Ovary (tissue), 10 donors: ENCODE measurements at regions of chr5 and their contacts with region 1.

Region 1: DNA sequence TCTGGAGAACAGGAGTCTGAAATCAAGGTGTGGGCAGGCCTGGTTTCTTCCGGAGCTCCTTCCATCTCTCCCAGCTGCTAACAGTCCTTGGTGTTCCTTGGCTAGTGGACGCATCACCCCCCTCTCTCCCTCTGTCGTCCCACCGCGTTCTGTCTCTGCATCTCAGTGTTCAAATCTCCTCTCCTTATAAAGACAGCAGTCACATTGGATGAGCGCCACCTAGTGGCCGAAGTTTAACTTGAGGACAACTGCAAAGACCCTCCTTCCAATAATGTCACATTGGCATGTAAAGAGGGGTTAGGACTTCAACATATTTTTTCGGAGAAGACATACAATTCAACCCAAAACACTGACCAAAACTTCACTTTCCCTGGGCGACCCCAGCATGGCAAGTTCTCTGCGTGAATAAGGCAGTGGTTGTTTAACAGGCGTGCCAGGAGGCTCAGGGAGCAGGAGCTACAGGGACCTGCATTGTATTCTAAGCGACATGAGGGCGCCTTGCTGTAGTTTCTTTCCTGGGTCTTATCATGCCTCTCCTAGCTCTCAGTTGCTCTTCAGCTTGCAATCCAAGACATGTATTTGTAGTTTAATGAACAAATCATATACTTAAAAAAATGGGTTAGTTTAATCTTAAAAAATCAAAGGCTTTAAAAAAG is 27.9 kb upstream of the BASP1 start:
- DNase-seq: peak; percentile 73 to 82 (median 80)
- H3K4me3 ChIP-seq: no peak overlapping the region
- H3K27ac ChIP-seq: no peak overlapping the region
- H3K4me1 ChIP-seq: peaks cover 4% of the 10 kb centered on the region
- H3K27me3 ChIP-seq: no peaks in the 10 kb centered on the region
- CTCF ChIP-seq: peak; percentile 57 to 66 (median 63)
- EP300 ChIP-seq: no peak
- POLR2A ChIP-seq: no peak

Region 2: DNA sequence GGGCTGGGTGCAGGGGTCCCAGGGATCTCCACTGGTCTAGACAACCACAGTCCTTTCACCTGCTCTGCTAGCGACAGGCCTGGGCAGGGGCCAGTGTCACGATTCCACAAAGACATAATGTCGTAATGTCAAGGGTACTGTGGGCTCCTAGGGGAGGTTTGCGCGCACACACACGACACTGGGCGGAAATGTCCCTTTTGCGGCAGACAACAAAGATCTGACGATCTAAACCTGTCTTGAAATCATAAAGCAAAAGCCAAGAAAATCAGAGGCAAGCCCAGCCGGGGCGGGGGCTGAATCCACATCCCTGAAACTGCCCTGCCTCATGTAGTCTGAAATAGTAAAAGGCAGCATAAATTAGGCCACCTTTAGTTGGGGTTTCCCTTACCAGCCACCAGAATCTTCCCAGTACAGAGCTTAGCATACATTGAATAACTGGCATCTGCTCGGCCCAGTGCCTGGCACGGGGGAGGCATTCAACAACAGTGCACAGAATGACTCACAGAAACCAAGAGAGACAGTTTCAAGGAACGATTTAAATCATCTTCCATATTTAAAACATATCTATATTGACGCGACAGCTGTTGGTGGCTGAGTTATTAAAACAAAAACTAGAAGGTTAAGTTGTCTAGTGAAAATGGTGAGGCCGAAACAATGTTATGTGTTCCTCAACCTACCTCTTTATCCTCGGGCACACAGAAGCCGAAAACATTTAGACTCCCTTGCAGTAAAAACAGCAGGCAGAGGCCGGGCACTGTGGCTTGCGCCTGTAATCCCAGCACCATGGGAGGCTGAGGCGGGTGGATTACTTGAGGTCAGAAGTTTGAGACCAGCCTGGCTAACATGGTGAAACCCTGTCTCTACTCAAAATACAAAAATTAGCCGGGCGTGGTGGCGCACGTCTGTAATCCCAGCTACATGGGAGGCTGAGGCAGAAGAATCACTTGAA is 404.4 kb before region 1 on chr5:
- intact Hi-C with region 1: loop called (anchors 5 kb)
- DNase-seq: no peak
- H3K4me3 ChIP-seq: no peak overlapping the region
- H3K27ac ChIP-seq: no peak overlapping the region
- H3K4me1 ChIP-seq: no peaks in the 10 kb centered on the region
- H3K27me3 ChIP-seq: no peaks in the 10 kb centered on the region
- CTCF ChIP-seq: no peak
- EP300 ChIP-seq: no peak
- POLR2A ChIP-seq: no peak

Region 3: DNA sequence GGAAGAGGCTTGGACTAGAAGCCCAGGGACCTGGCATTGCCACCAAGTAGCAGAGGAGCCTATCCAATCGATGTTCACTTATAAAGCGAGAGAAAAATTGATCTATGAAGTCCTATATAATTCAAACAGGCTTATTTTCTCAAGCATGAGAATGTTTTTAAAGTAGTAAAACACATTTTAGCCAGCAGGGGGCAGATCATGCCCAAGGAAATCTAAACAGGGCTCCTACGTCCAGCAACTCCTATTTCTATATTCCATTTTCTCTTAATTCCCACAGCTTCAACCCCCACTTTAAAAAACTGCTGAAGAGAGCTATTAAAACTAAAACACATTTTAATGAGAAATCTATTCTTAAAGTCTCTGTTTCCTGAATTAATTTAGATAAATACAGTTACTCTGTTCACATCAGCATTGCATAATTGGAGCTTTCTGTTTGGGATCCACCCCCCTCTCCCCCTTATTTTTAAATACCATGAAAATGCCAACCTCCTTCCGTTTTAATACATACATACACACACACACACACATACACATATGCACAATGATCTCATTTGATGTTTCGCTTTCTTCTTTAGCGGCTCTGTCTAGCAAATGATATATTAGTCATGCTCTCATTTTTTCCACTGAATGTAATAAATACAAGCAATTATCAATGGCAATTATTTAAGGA is 398.3 kb before region 1 on chr5:
- intact Hi-C with region 1: loop called (anchors 5 kb)
- DNase-seq: peak in 1 of 5 donors; percentile 49
- H3K4me3 ChIP-seq: no peak overlapping the region
- H3K27ac ChIP-seq: no peak overlapping the region
- H3K4me1 ChIP-seq: no peaks in the 10 kb centered on the region
- H3K27me3 ChIP-seq: no peaks in the 10 kb centered on the region
- CTCF ChIP-seq: peak; percentile 56 to 83 (median 77)
- EP300 ChIP-seq: no peak
- POLR2A ChIP-seq: no peak

Region 4: DNA sequence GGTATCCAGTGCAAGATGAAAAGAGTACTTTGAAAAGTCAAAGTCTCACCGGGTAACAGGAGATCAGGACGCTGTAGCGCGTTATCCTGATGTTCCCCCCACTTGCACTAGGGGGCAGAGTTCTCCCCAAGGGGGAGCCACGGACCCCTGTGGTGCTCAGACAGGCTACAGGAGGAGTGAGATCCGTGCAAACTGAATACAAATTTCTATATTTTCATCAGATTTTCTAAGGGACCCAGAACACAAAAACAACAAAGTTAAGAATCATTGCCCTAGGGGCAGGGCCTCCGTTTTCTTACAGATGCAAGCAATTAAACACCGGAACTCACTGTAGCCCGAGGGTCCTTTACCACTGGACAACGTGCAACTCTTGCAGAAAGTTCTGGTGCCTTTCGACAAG is 255.4 kb before region 1 on chr5:
- intact Hi-C with region 1: loop called in 3 of 4 experiments (anchors 5 to 10 kb)
- DNase-seq: peak; percentile 63 to 81 (median 74)
- H3K4me3 ChIP-seq: peak overlapping the region; percentile 56
- H3K27ac ChIP-seq: no peak overlapping the region
- H3K4me1 ChIP-seq: peaks cover 14% of the 10 kb centered on the region
- H3K27me3 ChIP-seq: no peaks in the 10 kb centered on the region
- CTCF ChIP-seq: peak; percentile 38 to 75 (median 57)
- EP300 ChIP-seq: no peak
- POLR2A ChIP-seq: no peak

Region 5: GRCh38 chr5:17081142-17081541 is 108.4 kb before region 1 on chr5:
- intact Hi-C with region 1: loop called in 1 of 4 experiments (anchors 10 kb)
- DNase-seq: no peak
- H3K4me3 ChIP-seq: no peak overlapping the region
- H3K27ac ChIP-seq: no peak overlapping the region
- H3K4me1 ChIP-seq: peaks cover 6% of the 10 kb centered on the region
- H3K27me3 ChIP-seq: no peaks in the 10 kb centered on the region
- CTCF ChIP-seq: no peak
- EP300 ChIP-seq: no peak
- POLR2A ChIP-seq: no peak

Region 6: GRCh38 chr5:17132444-17133083 is 56.9 kb before region 1 on chr5:
- intact Hi-C with region 1: loop called in 1 of 4 experiments (anchors 5 kb)
- DNase-seq: no peak
- H3K4me3 ChIP-seq: no peak overlapping the region
- H3K27ac ChIP-seq: no peak overlapping the region
- H3K4me1 ChIP-seq: peaks cover 4% of the 10 kb centered on the region
- H3K27me3 ChIP-seq: no peaks in the 10 kb centered on the region
- CTCF ChIP-seq: peak; percentile 55 to 57 (median 56)
- EP300 ChIP-seq: no peak
- POLR2A ChIP-seq: no peak

Region 7: GRCh38 chr5:17282283-17283120 is 93.0 kb after region 1 on chr5:
- intact Hi-C with region 1: no loop called
- DNase-seq: no peak
- H3K4me3 ChIP-seq: no peak overlapping the region
- H3K27ac ChIP-seq: no peak overlapping the region
- H3K4me1 ChIP-seq: no peaks in the 10 kb centered on the region
- H3K27me3 ChIP-seq: no peaks in the 10 kb centered on the region
- CTCF ChIP-seq: no peak
- EP300 ChIP-seq: no peak
- POLR2A ChIP-seq: no peak